Activated CD8-positive, alpha-beta memory T cell treated with anti-CD3 and anti-CD28 coated beads, Interleukin-2, amount 10 ng/mL, durations not matched to agents 7 days and 5 days (primary cell): ENCODE measurements at regions of chr16 and their contacts with region 1.

Region 1: GRCh38 chr16:81715358-81716196 is 63.5 kb upstream of the PLCG2 start:
- DNase-seq: peak; percentile 61
- ATAC-seq: peak; percentile 24
- H3K4me3 Mint-ChIP-seq: peak overlapping the region; percentile 62
- H3K27ac Mint-ChIP-seq: peak overlapping the region; percentile 87
- H3K4me1 Mint-ChIP-seq: peaks cover 45% of the 10 kb centered on the region
- H3K27me3 Mint-ChIP-seq: no peaks in the 10 kb centered on the region

Region 2: DNA sequence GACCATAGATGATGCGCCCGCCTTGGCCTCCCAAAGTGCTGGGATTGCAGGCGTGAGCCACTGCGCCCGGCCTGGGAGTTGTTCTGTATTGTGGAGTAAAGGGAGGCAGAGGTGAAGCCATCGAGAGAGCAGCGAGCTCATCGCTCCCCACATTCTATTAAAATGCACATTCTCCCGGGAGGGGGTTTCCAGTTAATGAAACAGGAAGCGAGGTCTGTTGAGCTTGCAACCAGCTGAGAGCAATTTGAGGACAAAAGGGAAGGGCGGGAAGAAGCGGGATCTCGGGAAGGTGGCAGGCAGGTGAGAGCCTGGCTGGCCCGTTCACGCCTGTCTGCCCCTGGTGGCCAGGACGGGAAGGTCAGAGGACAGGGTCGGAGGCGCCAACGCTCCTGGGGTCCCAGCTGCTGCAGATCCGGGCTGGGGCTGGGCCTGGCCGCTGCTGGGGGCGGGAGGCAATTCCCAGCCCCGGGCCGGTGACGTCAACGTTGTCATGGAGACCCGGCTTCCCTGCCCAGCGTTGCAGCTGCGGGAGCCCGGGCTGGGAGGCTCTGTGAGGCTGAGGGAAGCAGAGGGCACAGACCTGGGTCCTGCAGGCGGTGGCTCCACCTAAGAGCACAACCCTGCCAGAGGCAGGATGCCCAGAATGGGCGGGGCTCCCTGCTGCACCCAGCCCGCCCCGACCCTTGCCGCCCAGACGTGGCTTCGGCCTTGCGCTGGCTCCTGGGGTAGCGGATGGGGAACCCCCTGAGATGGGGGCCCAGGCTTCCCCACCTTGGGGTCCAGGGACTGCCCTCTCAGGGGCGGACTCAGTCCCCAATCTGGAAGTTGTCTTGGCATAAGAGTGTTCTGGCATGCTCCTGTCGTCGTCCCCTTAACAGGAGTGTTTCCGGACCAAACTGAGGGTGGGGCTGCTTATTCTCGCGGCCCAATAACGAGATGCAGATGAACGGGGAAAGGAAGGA is 14.8 kb after region 1 on chr16:
- CTCF ChIA-PET with region 1: interaction called, 10 read pairs
- DNase-seq: peak; percentile 71
- ATAC-seq: peak; percentile 92
- H3K4me3 Mint-ChIP-seq: peak overlapping the region; percentile 72
- H3K27ac Mint-ChIP-seq: peak overlapping the region; percentile 79
- H3K4me1 Mint-ChIP-seq: peaks cover 17% of the 10 kb centered on the region
- H3K27me3 Mint-ChIP-seq: no peaks in the 10 kb centered on the region

Region 3: DNA sequence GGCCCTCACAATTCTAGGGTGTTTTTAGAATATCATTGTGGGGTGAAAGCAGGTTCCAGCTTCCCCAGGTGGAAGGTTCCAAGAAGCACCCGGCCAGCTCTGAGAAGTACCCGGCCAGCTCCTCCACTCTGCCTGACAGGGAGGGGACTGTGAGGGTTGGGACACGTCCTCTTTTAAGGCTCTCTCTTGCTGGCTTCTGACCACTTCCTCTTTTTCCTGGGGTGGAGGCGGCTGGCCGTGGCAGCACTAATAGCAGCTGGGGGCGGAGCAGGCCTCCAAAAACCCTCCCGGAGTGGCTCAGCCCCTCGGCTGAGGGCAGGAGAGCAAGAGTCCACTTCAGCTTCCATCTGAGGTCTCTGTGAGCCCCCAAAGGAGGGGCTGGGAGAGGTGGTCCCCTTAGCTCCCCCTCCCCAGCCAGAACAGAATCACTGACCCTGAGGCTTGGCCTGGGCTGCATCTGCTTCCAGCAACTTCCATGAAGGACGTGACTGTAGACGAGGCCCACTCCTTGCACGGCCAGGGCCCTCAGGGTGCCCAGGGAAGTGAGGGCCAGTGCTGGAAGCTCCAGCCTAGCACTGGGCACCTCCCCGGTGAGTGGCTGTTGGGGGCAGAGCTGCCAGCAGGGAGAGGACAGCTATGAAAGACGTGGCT is 36.8 kb after region 1 on chr16:
- CTCF ChIA-PET with region 1: no interaction called
- DNase-seq: no peak
- ATAC-seq: peak; percentile 17
- H3K4me3 Mint-ChIP-seq: no peak overlapping the region
- H3K27ac Mint-ChIP-seq: no peak overlapping the region
- H3K4me1 Mint-ChIP-seq: peaks cover 41% of the 10 kb centered on the region
- H3K27me3 Mint-ChIP-seq: no peaks in the 10 kb centered on the region